Pancreas (tissue), 10 donors: ENCODE measurements at regions of chr1 and their contacts with region 1.

Region 1: DNA sequence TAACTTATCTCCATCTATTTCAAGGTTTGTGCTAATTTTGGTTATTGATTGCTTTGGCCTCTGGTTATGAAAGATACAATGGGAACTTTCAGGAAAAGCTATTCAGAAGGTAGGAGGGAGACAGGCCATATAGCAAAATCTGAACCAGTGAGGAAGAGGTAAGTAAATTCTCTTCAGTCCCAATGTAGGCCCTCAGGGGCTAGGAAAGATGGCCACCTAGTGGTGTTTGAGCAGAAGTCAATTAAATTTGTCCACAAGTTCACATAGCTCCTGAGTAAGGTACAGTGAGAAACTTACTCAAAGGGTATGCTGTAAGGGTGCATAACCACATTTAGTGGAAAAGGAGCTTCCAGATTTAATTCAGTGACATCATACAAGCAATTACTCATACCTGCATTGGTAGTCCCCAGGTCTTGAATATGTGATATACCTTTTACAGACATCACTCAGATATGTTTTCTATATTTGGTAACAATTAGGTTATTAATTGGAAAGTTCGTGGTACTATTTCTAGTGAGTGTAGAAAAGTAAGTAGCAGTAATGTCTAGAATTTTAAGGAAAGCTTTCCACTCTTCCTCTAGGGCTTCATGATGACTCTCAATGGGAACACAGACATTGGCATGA is 21.4 kb upstream of the FMO1 start:
- DNase-seq: peak in 2 of 6 donors; percentile 22 to 38
- ATAC-seq: peak; percentile 61 to 94 (median 91)
- H3K4me3 ChIP-seq: no peak overlapping the region
- H3K27ac ChIP-seq: no peak overlapping the region
- H3K4me1 ChIP-seq: no peaks in the 10 kb centered on the region
- H3K27me3 ChIP-seq: no peaks in the 10 kb centered on the region
- CTCF ChIP-seq: peak; percentile 41 to 60 (median 56)

Region 2: DNA sequence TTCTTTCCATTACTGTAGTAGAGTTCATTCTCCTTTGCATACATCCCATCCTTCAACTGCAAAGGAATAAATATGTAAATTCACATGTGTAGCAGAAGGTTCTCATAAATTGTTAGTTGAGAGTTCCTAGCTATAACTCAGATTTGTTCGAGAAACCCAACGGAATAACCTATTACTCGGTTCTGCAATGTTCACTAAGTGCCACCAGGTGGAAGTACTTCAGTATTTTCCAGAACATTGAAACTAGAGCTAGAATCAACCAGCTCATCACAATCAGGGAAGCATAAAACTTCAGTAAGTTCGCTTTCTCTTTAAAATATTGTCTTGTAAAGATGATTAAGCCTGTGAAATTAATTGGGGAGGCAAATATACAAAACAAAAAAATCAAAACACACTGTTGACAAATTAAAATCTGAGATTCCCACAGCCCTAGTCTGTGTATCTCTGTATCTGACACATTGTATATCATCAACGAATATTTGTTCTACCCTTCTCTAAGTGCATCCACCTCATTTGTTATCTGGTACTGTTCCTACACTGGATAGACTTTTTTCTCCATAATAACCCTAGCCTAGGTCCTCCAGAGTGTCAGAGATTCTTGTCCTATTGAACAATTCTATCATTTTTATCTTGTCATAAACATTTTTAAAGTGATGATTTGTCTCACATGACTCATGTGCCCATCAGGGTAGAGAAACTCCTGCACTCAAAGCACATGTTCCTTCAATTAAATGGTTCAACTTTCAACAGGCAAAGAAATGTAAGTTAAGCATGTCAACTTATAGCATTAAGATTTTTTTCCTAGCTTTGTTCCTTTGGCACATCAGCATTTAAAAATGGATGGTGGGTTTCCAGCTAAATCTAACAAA is 259.6 kb before region 1 on chr1:
- intact Hi-C with region 1: loop called in 1 of 3 experiments (anchors 10 kb)
- DNase-seq: peak in 1 of 6 donors; percentile 10
- ATAC-seq: peak in 3 of 4 donors; percentile 72 to 85 (median 83)
- H3K4me3 ChIP-seq: no peak overlapping the region
- H3K27ac ChIP-seq: no peak overlapping the region
- H3K4me1 ChIP-seq: no peaks in the 10 kb centered on the region
- H3K27me3 ChIP-seq: no peaks in the 10 kb centered on the region
- CTCF ChIP-seq: peak; percentile 15 to 49 (median 37)

Region 3: DNA sequence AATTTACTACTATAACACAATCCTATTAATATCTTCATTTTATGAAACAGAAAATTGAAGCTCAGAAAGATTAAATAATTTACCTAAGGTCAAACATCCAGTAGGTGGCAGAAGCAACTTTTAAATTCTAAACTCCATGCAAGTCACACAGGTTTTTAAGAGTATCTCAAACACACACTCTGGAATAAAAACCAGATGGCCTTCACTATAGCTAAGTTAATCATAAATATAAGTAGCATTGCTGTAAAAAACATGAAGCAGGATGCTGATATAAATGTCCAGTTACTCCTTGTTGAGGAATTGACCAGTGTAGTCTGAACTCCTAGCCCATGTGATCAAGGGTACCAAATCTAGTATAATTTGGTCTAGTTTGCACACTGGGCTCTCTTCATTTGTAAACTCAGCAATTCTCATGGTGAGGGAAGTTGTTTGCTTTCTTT is 145.5 kb before region 1 on chr1:
- intact Hi-C with region 1: loop called in 1 of 3 experiments (anchors 10 kb)
- DNase-seq: no peak
- ATAC-seq: peak; percentile 46 to 84 (median 72)
- H3K4me3 ChIP-seq: no peak overlapping the region
- H3K27ac ChIP-seq: peak overlapping the region in 1 of 4 donors; percentile 11
- H3K4me1 ChIP-seq: peaks cover 3 to 7% (median 3%) of the 10 kb centered on the region in 3 donors
- H3K27me3 ChIP-seq: no peaks in the 10 kb centered on the region
- CTCF ChIP-seq: peak in 1 of 4 donors; percentile 17

Region 4: GRCh38 chr1:171185091-171185490 is 41.8 kb before region 1 on chr1 and contains the start of gene FMO2:
- intact Hi-C with region 1: no loop called
- DNase-seq: no peak
- ATAC-seq: peak in 1 of 4 donors; percentile 13
- H3K4me3 ChIP-seq: peak within 1 kb of the TSS in 3 of 4 donors; percentile 2 to 8 (median 6)
- H3K27ac ChIP-seq: no peak within 1 kb of the TSS
- H3K4me1 ChIP-seq: peaks cover 0 to 6% (median 0%) of the 10 kb centered on the region in 3 donors
- H3K27me3 ChIP-seq: no peaks in the 10 kb centered on the region
- CTCF ChIP-seq: no peak
- total RNA-seq, gene FMO2: 2.3 to 9.6 (median 5.0) TPM

Region 5: GRCh38 chr1:171397851-171398469 is 171.1 kb after region 1 on chr1:
- intact Hi-C with region 1: no loop called
- DNase-seq: no peak
- ATAC-seq: no peak
- H3K4me3 ChIP-seq: no peak overlapping the region
- H3K27ac ChIP-seq: no peak overlapping the region
- H3K4me1 ChIP-seq: no peaks in the 10 kb centered on the region
- H3K27me3 ChIP-seq: peaks cover 0 to 4% (median 0%) of the 10 kb centered on the region in 4 donors
- CTCF ChIP-seq: no peak